ENCODE measurements at regions of chr17 and their contacts with region 1.

Region 1: GRCh38 chr17:82320956-82321927 is 3.8 kb upstream of the CD7 start:
- DNase-seq: no peak
- H3K4me3 ChIP-seq: no peak overlapping the region
- H3K27ac ChIP-seq: no peak overlapping the region
- H3K4me1 ChIP-seq: no peaks in the 10 kb centered on the region
- H3K27me3 ChIP-seq: no peaks in the 10 kb centered on the region
- CTCF ChIP-seq: peak; percentile 71 to 74
- POLR2A ChIP-seq: no peak

Region 2: DNA sequence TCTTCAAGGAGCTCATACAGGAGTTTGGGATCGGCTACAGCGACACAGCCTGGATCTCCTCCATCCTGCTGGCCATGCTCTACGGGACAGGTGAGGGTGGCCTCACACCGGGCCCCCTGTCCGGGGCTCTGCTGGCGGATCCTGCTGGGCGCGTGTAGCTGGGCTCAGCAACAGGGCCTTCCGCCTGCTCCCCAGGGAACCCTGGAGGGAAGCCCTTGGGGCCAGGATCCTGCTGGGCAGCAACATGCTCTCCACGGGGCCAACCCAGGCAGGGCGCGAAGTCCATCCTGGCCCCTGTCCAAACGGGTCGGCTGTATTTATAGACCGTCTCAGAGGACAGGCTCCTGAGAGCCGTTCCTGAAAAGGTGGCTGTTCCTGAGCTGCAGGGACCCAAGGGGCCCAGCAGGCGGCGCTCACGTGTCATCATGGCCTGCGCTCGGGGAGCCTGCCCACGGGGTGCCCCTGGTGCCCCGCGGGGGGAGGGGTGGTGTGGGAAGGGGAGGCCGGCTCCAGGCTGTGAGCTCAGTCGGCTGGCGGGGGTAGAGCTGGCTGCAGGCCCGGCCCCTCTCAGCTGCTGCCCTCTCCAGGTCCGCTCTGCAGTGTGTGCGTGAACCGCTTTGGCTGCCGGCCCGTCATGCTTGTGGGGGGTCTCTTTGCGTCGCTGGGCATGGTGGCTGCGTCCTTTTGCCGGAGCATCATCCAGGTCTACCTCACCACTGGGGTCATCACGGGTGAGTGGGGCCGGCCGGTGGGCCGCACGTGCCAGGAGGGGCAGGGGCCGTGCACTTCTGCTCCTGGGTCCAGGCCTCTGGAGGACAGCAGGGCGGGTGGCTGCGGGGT is 84.9 kb before region 1 on chr17:
- CTCF ChIA-PET with region 1: interaction called, 8 read pairs
- POLR2A ChIA-PET with region 1: no interaction called
- dilution Hi-C with region 1: no loop called
- intact Hi-C with region 1: loop called (anchors 2 kb)
- DNase-seq: peak; percentile 45
- H3K4me3 ChIP-seq: no peak overlapping the region
- H3K27ac ChIP-seq: no peak overlapping the region
- H3K4me1 ChIP-seq: peaks cover 21% of the 10 kb centered on the region
- H3K27me3 ChIP-seq: no peaks in the 10 kb centered on the region
- CTCF ChIP-seq: peak; percentile 80 to 91
- POLR2A ChIP-seq: no peak

Region 3: DNA sequence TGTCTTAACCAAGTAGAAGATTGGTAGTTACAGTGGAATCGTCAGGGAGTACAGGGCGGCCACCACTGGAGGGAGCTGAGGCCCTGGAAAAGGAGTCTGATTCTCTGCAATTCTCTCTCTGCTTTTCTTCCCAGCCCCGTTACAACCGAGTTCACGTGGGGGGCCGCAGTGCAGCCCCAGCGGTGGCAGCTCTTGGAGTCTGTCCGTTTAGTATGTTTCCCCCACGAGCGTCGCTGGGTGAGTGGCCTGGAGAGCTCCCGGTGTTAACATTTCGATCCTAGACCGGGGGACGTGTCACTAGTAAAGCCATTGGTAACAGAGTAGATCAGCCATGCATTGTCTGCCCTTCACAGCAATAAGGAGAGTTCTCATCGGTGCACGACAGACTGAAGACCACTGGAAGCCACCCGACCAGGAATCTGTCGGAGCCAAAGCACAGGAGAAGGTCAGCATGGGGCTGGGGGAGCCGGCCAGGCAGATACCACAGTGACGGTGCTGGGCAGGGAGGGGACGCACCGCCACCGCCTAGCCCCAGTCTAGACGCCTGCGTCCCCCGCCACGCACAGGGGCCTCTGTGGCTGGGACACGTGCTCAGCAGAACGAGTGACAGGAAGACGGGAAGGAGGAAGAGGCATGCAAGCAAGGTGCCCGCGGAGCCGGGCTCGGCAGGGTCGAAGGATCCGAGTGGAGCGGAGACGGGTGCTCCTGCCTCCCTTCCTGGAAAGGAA is 76.7 kb before region 1 on chr17:
- CTCF ChIA-PET with region 1: interaction called, 5 read pairs
- POLR2A ChIA-PET with region 1: no interaction called
- dilution Hi-C with region 1: no loop called
- intact Hi-C with region 1: loop called (anchors 2 kb)
- DNase-seq: peak; percentile 38
- H3K4me3 ChIP-seq: no peak overlapping the region
- H3K27ac ChIP-seq: no peak overlapping the region
- H3K4me1 ChIP-seq: peaks cover 34% of the 10 kb centered on the region
- H3K27me3 ChIP-seq: no peaks in the 10 kb centered on the region
- CTCF ChIP-seq: peak; percentile 48 to 62
- POLR2A ChIP-seq: no peak